Activated CD8-positive, alpha-beta T cell treated with anti-CD3 and anti-CD28 coated beads for 36 hours (primary cell): ENCODE measurements at regions of chr12 and their contacts with region 1.

Region 1: GRCh38 chr12:48795480-48796455 is 6.9 kb upstream of the ADCY6 start:
- DNase-seq: peak; percentile 73
- ATAC-seq: peak; percentile 80
- H3K4me3 Mint-ChIP-seq: no peak overlapping the region
- H3K27ac Mint-ChIP-seq: no peak overlapping the region
- H3K4me1 Mint-ChIP-seq: peaks cover 10% of the 10 kb centered on the region
- H3K27me3 Mint-ChIP-seq: peaks cover 12% of the 10 kb centered on the region
- CTCF ChIP-seq: peak; percentile 97

Region 2: DNA sequence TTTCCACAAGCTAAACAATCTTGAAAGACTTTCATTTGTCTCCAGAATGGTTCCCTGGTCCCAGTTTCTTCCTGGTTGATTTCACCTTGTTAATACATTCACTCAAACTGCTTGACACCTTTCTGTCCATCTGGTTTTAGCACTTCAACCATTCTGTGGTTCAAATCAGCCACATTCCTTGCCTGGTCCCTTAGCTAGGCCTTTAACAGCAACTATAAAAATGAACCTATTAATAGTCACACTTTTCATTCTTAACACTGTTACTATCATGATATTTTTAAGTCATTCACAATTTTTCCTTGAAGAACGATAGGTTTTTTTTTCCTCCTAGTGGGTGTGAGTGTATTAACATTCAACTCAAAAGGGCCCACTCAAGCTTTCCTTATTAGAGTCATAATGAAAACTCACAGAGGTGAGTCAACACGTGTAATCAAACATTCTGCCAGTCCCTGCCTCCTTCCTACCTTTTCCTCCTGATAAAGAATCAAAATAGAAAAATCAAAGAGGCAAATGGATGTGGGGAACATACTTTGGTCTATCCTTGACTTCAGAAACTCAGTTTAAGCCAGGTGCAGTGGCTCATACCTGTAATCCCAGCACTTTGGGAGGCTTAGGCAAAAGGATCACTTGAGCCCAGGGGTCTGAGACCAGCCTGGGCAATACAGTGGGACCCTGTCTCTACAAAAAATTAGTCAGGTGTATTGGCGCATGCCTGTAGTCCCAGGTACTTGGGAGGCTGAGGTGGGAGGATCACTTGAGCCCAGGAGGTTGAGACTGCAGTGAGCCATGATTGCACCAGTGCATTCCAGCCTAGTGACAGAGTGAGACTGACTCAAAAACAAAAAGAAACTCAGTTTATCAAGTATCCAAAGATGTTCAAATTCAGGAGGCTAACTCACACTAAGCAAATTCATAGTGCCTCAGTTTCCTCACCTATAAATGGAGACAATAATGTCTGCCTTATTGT is 44.7 kb before region 1 on chr12:
- CTCF ChIA-PET with region 1: interaction called, 204 read pairs
- POLR2A ChIA-PET with region 1: interaction called, 4 read pairs
- intact Hi-C with region 1: loop called (anchors 1 kb)
- DNase-seq: peak; percentile 36
- ATAC-seq: peak; percentile 85
- H3K4me3 Mint-ChIP-seq: no peak overlapping the region
- H3K27ac Mint-ChIP-seq: peak overlapping the region; percentile 74
- H3K4me1 Mint-ChIP-seq: peaks cover 18% of the 10 kb centered on the region
- H3K27me3 Mint-ChIP-seq: peaks cover 7% of the 10 kb centered on the region
- CTCF ChIP-seq: peak; percentile 28

Region 3: GRCh38 chr12:48758221-48758620 is 37.5 kb before region 1 on chr12:
- CTCF ChIA-PET with region 1: interaction called, 204 read pairs
- POLR2A ChIA-PET with region 1: interaction called, 4 read pairs
- intact Hi-C with region 1: loop called (anchors 1 kb)
- DNase-seq: no peak
- ATAC-seq: no peak
- H3K4me3 Mint-ChIP-seq: no peak overlapping the region
- H3K27ac Mint-ChIP-seq: no peak overlapping the region
- H3K4me1 Mint-ChIP-seq: no peaks in the 10 kb centered on the region
- H3K27me3 Mint-ChIP-seq: peaks cover 2% of the 10 kb centered on the region
- CTCF ChIP-seq: no peak

Region 4: GRCh38 chr12:48779869-48780268 is 15.9 kb before region 1 on chr12:
- CTCF ChIA-PET with region 1: interaction called, 19 read pairs
- POLR2A ChIA-PET with region 1: no interaction called
- intact Hi-C with region 1: no loop called
- DNase-seq: no peak
- ATAC-seq: no peak
- H3K4me3 Mint-ChIP-seq: no peak overlapping the region
- H3K27ac Mint-ChIP-seq: no peak overlapping the region
- H3K4me1 Mint-ChIP-seq: no peaks in the 10 kb centered on the region
- H3K27me3 Mint-ChIP-seq: peaks cover 5% of the 10 kb centered on the region
- CTCF ChIP-seq: no peak

Region 5: DNA sequence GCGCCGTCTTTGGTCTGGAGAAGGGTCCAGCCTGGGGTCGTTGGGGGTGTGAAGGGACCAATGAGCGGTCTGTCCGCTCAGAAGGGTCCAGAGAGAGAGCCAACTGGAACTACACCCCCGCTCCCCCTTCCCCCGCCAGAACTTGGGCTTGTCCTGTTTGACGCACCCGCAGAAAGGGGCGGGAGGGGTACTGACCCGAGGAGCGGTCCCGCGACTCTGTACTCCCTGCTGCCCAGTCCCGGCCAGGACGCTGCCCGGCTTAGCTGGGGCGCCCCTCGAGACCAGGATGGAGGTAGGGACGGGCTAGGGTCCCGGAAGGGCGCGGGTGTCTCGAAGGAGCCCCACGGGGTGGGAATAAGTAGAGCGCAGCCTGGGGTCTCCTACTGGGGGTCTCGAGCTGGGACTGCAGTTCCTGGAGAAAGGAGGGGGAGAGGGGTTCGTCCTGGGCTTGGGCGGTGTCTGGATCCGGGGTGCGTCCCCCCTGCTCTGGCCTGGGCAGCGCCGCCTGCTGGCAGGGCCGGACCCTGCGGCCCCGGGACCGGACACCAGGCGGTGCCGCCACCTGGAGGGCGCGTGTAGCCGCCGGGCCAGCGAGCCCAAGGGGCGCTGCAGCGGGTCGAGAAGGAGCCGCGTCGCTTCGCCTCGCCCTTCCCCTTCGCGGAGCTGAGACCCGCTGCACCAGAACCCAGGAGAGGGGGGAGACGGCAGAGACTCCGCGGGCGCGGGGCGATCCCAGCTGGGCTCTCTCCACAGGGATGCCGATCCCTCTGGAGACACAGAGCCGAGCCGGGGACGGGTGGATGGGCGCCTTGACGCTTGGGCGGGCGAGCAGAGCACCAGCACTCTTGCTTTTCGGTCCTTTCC is 18.7 kb after region 1 on chr12:
- CTCF ChIA-PET with region 1: interaction called, 62 read pairs
- POLR2A ChIA-PET with region 1: interaction called, 3 read pairs
- intact Hi-C with region 1: no loop called
- DNase-seq: peak; percentile 86
- ATAC-seq: peak; percentile 83
- H3K4me3 Mint-ChIP-seq: peak overlapping the region; percentile 95
- H3K27ac Mint-ChIP-seq: peak overlapping the region; percentile 67
- H3K4me1 Mint-ChIP-seq: peaks cover 34% of the 10 kb centered on the region
- H3K27me3 Mint-ChIP-seq: peaks cover 19% of the 10 kb centered on the region
- CTCF ChIP-seq: peak; percentile 100

Region 6: GRCh38 chr12:48828841-48829575 is 33.2 kb after region 1 on chr12:
- CTCF ChIA-PET with region 1: no interaction called
- POLR2A ChIA-PET with region 1: no interaction called
- intact Hi-C with region 1: no loop called
- DNase-seq: no peak
- ATAC-seq: no peak
- H3K4me3 Mint-ChIP-seq: no peak overlapping the region
- H3K27ac Mint-ChIP-seq: no peak overlapping the region
- H3K4me1 Mint-ChIP-seq: no peaks in the 10 kb centered on the region
- H3K27me3 Mint-ChIP-seq: no peaks in the 10 kb centered on the region
- CTCF ChIP-seq: no peak